ENCODE measurements at regions of chr2 and their contacts with region 1.

Region 1: DNA sequence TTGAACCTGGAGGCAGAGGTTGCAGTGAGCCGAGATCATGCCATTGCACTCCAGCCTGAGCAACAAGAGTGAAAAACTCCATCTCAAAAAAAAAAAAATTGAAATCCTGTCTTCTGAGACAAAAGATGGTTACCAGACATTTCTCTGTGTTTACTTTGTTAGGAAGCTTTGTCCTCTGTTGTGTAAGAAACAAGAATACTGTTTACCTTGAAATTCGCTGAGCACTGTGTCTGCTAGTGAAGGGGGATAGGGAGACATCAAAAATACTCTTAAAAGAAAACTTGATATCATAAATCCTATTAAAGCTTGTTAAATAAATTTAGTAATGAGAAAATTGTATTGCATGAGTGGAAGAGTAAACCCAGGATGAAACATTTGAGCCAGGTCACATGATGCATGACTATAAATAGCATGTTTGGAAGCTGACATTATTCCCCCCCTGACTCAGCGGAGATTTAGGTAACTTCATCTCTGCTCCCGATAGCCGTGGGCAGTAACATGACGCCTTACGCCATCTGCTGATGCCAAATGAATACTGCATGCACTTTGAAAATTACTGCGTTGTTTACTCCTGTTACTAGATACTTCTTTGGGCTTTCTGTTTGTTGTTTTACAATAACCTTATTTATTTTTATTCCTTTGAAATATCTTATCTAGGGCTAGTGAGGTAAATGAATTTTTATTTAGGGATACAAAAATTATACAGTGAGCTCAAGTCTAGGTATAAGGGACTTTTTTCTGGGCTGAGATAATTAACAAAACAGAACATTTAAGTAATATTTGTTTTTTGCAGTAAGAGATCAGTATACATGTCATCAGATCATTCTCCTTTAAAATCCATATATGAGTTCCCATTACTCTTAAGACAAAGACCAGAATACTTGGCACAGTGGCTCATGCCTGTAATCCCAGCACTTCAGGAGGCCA is 134.9 kb downstream of the MAP3K20 start:
- DNase-seq: peak; percentile 66
- ATAC-seq: peak; percentile 89
- H3K4me3 ChIP-seq: no peak overlapping the region
- H3K27ac ChIP-seq: no peak overlapping the region
- H3K4me1 ChIP-seq: no peaks in the 10 kb centered on the region
- H3K27me3 ChIP-seq: no peaks in the 10 kb centered on the region
- CTCF ChIP-seq: peak; percentile 91
- EP300 ChIP-seq: peak in 1 of 2 experiments; percentile 15; a peak in 1 of 4 replicates
- POLR2A ChIP-seq: no peak
- RAD21 ChIP-seq: peak; percentile 88

Region 2: GRCh38 chr2:172977270-172978062 is 233.1 kb before region 1 on chr2:
- CTCF ChIA-PET with region 1: interaction called, 3 read pairs
- POLR2A ChIA-PET with region 1: no interaction called
- in situ Hi-C with region 1: no loop called
- intact Hi-C with region 1: loop called (anchors 5 kb)
- DNase-seq: no peak
- ATAC-seq: peak; percentile 95
- H3K4me3 ChIP-seq: no peak overlapping the region
- H3K27ac ChIP-seq: no peak overlapping the region
- H3K4me1 ChIP-seq: no peaks in the 10 kb centered on the region
- H3K27me3 ChIP-seq: peaks cover 0 to 27% of the 10 kb centered on the region in 2 experiments; a peak in 3 of 5 replicates
- CTCF ChIP-seq: peak; percentile 79
- EP300 ChIP-seq: no peak
- POLR2A ChIP-seq: no peak
- RAD21 ChIP-seq: peak; percentile 79

Region 3: DNA sequence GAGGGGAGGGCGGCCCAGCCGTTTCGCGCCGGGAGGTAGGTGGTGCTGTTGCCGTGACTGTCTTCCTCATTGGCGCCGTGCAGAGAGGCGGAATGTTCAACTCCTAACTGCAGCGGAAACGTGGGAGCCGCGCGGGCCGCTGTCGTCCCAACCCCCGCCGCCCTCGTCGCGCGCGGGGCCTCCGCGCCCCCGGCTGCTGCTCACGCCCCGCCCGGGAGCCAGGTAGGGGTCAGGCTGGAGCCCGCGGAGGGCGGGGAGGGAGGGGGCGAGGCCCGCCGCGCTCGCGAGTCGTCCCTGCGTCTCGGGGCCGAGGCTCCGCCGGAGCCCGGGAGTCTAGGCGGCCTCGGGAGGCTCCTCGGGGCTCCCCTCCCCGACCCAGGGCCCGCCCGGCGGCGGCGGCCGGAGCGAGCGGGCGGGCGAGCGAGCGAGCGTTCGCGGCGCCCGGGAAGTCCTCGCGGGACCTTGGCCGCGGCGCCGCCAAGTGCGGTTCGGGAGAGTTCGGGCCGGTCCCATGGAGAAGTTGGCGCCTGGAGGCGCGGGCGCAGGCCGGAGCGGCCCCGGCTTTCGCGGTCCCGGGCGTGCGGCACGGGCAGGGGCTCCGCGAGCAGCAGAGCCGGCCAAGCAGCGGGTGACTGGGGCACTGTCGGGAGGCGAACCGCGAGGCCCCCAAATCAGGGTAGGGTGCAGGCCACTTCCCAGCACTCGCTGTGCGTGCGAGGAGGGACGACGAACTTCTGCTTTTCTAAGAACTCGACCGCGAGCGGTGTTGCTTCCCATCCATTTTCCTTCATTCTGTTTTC is 134.6 kb before region 1 on chr2 and contains the start of gene MAP3K20:
- CTCF ChIA-PET with region 1: interaction called, 5 read pairs
- POLR2A ChIA-PET with region 1: no interaction called
- in situ Hi-C with region 1: no loop called
- intact Hi-C with region 1: loop called (anchors 5 kb)
- DNase-seq: peak; percentile 38
- ATAC-seq: peak; percentile 91
- H3K4me3 ChIP-seq: peak within 1 kb of the TSS; percentile 70 to 91 (median 80)
- H3K27ac ChIP-seq: peak within 1 kb of the TSS; percentile 45
- H3K4me1 ChIP-seq: peaks cover 23% of the 10 kb centered on the region
- H3K27me3 ChIP-seq: peaks cover 0 to 21% of the 10 kb centered on the region in 2 experiments; a peak in 3 of 5 replicates
- CTCF ChIP-seq: peak; percentile 74
- EP300 ChIP-seq: no peak
- POLR2A ChIP-seq: peak; percentile 30 to 62; a peak in 3 of 4 replicates
- RAD21 ChIP-seq: peak; percentile 48; the same call in 1 of the 2 replicates
- total RNA-seq, gene MAP3K20: 13.5 and 19.8 TPM in 2 replicates

Region 4: DNA sequence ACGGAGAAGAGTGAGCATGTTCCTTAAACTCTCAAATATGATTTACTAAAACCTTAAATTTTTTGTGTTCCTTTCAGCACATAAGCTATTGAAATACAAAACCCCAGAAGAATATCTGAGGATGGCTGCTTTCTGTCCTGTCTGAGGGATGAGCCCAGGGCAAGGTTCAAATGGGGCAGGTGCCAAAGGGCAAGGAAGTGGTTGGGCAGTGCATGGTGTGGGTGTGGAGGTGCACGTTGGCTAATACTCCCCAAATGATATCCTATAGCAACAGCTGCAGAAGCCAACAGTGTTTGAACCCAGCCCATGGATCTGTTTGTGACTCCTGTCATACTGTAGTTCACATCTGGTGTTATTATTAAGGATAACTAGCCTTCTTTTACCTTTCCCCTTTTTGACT is 327.2 kb after region 1 on chr2:
- CTCF ChIA-PET with region 1: no interaction called
- POLR2A ChIA-PET with region 1: no interaction called
- in situ Hi-C with region 1: no loop called
- intact Hi-C with region 1: no loop called
- DNase-seq: no peak
- ATAC-seq: no peak
- H3K4me3 ChIP-seq: no peak overlapping the region
- H3K27ac ChIP-seq: no peak overlapping the region
- H3K4me1 ChIP-seq: no peaks in the 10 kb centered on the region
- H3K27me3 ChIP-seq: peaks cover 0 to 7% of the 10 kb centered on the region in 2 experiments; a peak in 3 of 5 replicates
- CTCF ChIP-seq: no peak
- EP300 ChIP-seq: no peak
- POLR2A ChIP-seq: no peak
- RAD21 ChIP-seq: no peak